ENCODE measurements at regions of chr4 and their contacts with region 1.

Region 1: GRCh38 chr4:42371306-42372252 is 25.7 kb upstream of the SHISA3 start:
- DNase-seq: no peak
- ATAC-seq: peak in 1 of 2 donors; percentile 54

Region 2: GRCh38 chr4:42519803-42520417 is 148.3 kb after region 1 on chr4:
- intact Hi-C with region 1: loop called (anchors 5 kb)
- DNase-seq: no peak
- ATAC-seq: peak; percentile 35 to 58

Measured in left cardiac atrium (tissue), 4 donors.